ENCODE measurements at regions of chr9 and their contacts with region 1.

Region 1: GRCh38 chr9:99266255-99267023 is 44.4 kb downstream of the SEC61B start:
- DNase-seq: peak; percentile 71
- ATAC-seq: peak; percentile 74
- H3K4me3 Mint-ChIP-seq: peak overlapping the region; percentile 67
- H3K27ac Mint-ChIP-seq: peak overlapping the region; percentile 85
- H3K4me1 Mint-ChIP-seq: peaks cover 49% of the 10 kb centered on the region
- H3K27me3 Mint-ChIP-seq: no peaks in the 10 kb centered on the region
- CTCF ChIP-seq: no peak

Region 2: DNA sequence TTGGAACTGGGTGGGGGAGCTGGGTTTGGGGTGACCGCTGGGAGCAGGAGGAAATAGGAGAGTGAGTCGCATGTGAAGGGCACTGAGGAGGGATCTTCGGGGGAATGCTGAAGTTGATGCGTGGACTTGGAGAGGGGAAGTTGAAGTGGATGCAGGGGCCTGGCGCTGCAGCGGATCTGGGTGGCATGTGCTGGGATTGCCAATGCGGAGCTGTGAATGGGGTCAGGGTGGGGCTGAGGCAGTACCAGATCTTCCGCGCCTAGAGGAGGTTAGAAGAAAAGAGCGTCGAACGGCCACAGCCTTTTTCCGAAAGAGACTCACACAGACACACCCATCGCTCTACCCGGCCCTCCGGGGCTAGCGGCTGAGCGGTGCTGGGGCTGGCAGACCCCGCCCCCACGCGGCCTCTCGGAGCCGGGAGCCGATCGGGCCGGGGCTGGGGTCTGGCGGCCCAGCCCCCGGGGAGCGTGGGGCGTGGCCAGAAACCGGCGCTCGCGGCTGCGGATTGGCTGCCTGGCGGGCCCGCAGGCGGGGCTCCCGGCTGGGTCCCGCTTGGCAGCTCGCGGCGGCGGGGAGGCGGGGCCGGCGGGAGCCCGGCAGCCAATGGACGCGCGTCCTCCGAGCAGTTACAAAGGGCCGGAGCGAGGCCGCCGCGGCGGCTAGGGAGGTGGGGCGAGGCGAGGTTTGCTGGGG is 161.8 kb before region 1 on chr9 and contains the start of gene TGFBR1:
- CTCF ChIA-PET with region 1: no interaction called
- POLR2A ChIA-PET with region 1: no interaction called
- intact Hi-C with region 1: no loop called
- DNase-seq: peak; percentile 98
- ATAC-seq: peak; percentile 85
- H3K4me3 Mint-ChIP-seq: peak within 1 kb of the TSS; percentile 89
- H3K27ac Mint-ChIP-seq: peak within 1 kb of the TSS; percentile 83
- H3K4me1 Mint-ChIP-seq: peaks cover 50% of the 10 kb centered on the region
- H3K27me3 Mint-ChIP-seq: no peaks in the 10 kb centered on the region
- CTCF ChIP-seq: no peak
- total RNA-seq, gene TGFBR1: 53.5 and 65.3 TPM in 2 replicates

Region 3: GRCh38 chr9:99162759-99163364 is 103.6 kb before region 1 on chr9:
- CTCF ChIA-PET with region 1: interaction called, 5 read pairs
- POLR2A ChIA-PET with region 1: no interaction called
- intact Hi-C with region 1: loop called (anchors 1 kb)
- DNase-seq: no peak
- ATAC-seq: peak; percentile 55
- H3K4me3 Mint-ChIP-seq: no peak overlapping the region
- H3K27ac Mint-ChIP-seq: peak overlapping the region; percentile 66
- H3K4me1 Mint-ChIP-seq: peaks cover 45% of the 10 kb centered on the region
- H3K27me3 Mint-ChIP-seq: no peaks in the 10 kb centered on the region
- CTCF ChIP-seq: peak; percentile 22

Region 4: GRCh38 chr9:99253772-99254431 is 12.5 kb before region 1 on chr9:
- CTCF ChIA-PET with region 1: interaction called, 6 read pairs
- POLR2A ChIA-PET with region 1: interaction called, 12 read pairs
- intact Hi-C with region 1: loop called (anchors 1 kb)
- DNase-seq: peak; percentile 73
- ATAC-seq: peak; percentile 87
- H3K4me3 Mint-ChIP-seq: peak overlapping the region; percentile 59
- H3K27ac Mint-ChIP-seq: peak overlapping the region; percentile 94
- H3K4me1 Mint-ChIP-seq: peaks cover 49% of the 10 kb centered on the region
- H3K27me3 Mint-ChIP-seq: no peaks in the 10 kb centered on the region
- CTCF ChIP-seq: no peak

Region 5: GRCh38 chr9:99303177-99303576 is 36.7 kb after region 1 on chr9:
- CTCF ChIA-PET with region 1: no interaction called
- POLR2A ChIA-PET with region 1: no interaction called
- intact Hi-C with region 1: no loop called
- DNase-seq: no peak
- ATAC-seq: no peak
- H3K4me3 Mint-ChIP-seq: no peak overlapping the region
- H3K27ac Mint-ChIP-seq: no peak overlapping the region
- H3K4me1 Mint-ChIP-seq: peaks cover 1% of the 10 kb centered on the region
- H3K27me3 Mint-ChIP-seq: no peaks in the 10 kb centered on the region
- CTCF ChIP-seq: no peak

Region 6: GRCh38 chr9:99513441-99514112 is 247.1 kb after region 1 on chr9:
- CTCF ChIA-PET with region 1: no interaction called
- POLR2A ChIA-PET with region 1: no interaction called
- intact Hi-C with region 1: loop called (anchors 10 kb)
- DNase-seq: peak; percentile 22
- ATAC-seq: peak; percentile 49
- H3K4me3 Mint-ChIP-seq: peak overlapping the region; percentile 61
- H3K27ac Mint-ChIP-seq: peak overlapping the region; percentile 84
- H3K4me1 Mint-ChIP-seq: peaks cover 88% of the 10 kb centered on the region
- H3K27me3 Mint-ChIP-seq: no peaks in the 10 kb centered on the region
- CTCF ChIP-seq: no peak

Region 7: GRCh38 chr9:99807276-99807852 is 540.9 kb after region 1 on chr9:
- CTCF ChIA-PET with region 1: no interaction called
- POLR2A ChIA-PET with region 1: no interaction called
- intact Hi-C with region 1: loop called (anchors 1 kb)
- DNase-seq: no peak
- ATAC-seq: peak; percentile 65
- H3K4me3 Mint-ChIP-seq: no peak overlapping the region
- H3K27ac Mint-ChIP-seq: peak overlapping the region; percentile 5
- H3K4me1 Mint-ChIP-seq: peaks cover 28% of the 10 kb centered on the region
- H3K27me3 Mint-ChIP-seq: no peaks in the 10 kb centered on the region
- CTCF ChIP-seq: no peak

Region 8: GRCh38 chr9:100011062-100011681 is 744.7 kb after region 1 on chr9:
- CTCF ChIA-PET with region 1: interaction called, 4 read pairs
- POLR2A ChIA-PET with region 1: no interaction called
- intact Hi-C with region 1: loop called (anchors 1 kb)
- DNase-seq: no peak
- ATAC-seq: peak; percentile 62
- H3K4me3 Mint-ChIP-seq: no peak overlapping the region
- H3K27ac Mint-ChIP-seq: no peak overlapping the region
- H3K4me1 Mint-ChIP-seq: no peaks in the 10 kb centered on the region
- H3K27me3 Mint-ChIP-seq: no peaks in the 10 kb centered on the region
- CTCF ChIP-seq: no peak

Region 9: DNA sequence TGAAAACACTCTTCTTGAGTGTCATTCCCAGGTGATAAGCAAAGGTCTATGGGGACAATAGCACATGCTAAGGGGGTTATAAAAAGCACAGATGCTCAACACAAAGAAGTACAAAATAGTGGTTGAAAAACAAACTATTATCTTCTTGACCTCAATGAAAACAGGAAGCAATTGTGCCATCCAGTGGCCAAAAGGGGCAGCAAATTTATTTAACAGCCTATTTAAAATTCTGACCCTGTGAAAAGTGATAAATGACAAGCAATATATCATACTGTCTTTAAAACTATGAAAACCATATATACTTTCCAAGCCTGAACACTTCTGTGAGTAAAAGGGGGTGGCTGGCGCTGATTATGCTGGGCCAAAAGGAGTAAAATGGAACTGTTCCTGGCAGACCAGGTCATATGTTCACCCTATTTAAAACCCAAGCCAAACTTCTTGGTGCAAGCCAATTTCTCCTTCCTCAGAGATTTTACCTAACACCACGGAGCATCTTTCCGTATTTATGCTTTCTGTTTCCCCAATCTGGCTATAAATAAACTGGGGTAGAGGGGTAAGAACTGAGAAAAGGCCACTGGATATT is 1056.6 kb after region 1 on chr9:
- CTCF ChIA-PET with region 1: no interaction called
- POLR2A ChIA-PET with region 1: no interaction called
- intact Hi-C with region 1: loop called (anchors 2 kb)
- DNase-seq: no peak
- ATAC-seq: no peak
- H3K4me3 Mint-ChIP-seq: no peak overlapping the region
- H3K27ac Mint-ChIP-seq: no peak overlapping the region
- H3K4me1 Mint-ChIP-seq: peaks cover 2% of the 10 kb centered on the region
- H3K27me3 Mint-ChIP-seq: no peaks in the 10 kb centered on the region
- CTCF ChIP-seq: no peak

Measured in activated B cell treated with CpG ODN at 0.5 μM for 24 hours (primary cell).